Motor neuron (in vitro differentiated cells): ENCODE measurements at regions of chr13 and their contacts with region 1.

Region 1: DNA sequence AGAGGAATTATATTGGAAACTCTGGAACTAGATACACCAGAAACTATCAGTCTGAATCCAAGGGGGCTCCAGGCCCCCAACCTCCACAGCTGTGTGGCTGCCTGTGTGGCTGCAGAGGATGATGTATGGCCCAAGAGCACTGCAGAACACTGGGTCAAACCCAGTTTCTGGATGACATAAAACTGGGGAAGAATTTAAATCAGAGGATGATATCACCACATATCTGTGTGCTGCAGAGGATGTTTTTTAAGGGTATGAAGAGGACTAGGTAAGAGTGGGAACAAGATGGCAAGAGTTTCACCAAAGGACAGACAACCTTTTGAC is 226.4 kb downstream of the SUCLA2 start:
- ATAC-seq: peak in 5 of 8 experiments; percentile 52 to 70 (median 58)
- H3K4me3 ChIP-seq: no peak overlapping the region
- H3K27ac ChIP-seq: no peak overlapping the region
- H3K4me1 ChIP-seq: peaks cover 0 to 4% of the 10 kb centered on the region in 2 donors

Region 2: DNA sequence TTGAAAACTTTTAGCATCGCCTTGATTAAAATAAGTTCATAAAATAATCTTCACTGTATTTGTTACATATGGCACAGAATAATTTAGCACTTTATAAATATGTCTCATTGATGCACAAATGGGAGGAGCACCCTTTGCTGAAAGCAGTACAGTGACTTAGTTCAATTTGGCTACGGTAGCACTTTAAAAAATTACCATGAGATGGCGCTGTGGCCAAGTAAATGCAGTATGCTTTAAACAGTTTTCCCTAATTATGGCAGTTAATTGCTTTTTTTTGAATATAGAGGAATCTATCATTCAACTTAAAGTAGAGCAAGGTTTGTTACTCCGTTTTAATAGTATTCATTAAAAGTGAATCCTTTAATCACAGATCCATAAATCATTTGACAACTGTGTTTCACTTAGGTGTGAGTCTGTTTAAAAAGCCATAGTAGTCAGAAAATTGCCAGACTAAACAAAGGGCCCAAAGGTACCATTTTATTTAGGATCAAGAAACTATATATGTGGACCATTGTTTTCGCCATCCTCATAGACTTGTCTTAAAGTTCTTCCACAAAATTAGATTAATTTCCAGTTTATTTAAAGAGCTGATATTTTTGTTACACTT is 942.9 kb before region 1 on chr13:
- in situ Hi-C with region 1: loop called in 2 of 9 experiments (anchors 10 to 25 kb)
- ATAC-seq: peak in 3 of 8 experiments; percentile 51 to 75 (median 57)
- H3K4me3 ChIP-seq: no peak overlapping the region
- H3K27ac ChIP-seq: no peak overlapping the region
- H3K4me1 ChIP-seq: no peaks in the 10 kb centered on the region

Region 3: DNA sequence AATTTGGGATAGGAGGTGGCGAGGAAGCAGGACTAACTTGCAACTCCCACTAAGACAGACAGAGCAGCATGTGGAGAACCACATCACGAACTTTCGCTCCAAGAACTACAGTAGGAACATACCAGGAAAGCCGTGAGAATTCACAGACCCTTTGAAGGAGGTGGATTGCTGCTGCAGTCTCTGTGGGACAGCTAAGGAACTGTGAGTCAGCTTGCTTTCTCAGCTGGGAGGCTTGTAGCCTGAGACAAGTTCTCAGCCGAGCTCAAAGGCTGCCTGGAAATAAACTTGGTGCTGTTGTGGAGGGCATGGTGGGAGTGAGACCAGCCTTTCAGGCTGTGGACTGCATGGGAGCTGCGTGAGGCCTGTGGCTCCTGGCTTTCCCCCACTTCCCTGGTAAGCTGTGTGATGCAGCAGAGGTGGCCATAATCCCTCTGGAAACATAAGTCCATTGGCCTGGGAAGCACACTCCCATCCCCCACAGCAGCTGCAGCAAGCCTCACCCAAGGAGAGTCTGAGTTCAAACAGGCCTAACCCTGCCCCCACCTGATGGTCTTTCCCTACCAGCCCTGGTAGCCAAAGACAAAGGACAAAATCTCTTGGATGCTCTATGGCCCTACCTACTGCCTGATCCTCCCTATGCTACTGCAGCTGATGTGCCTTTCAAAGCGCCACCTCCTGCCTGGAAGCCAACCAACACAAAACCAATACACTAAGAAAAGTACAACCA is 436.7 kb before region 1 on chr13:
- in situ Hi-C with region 1: no loop called
- ATAC-seq: peak in 1 of 8 experiments; percentile 33
- H3K4me3 ChIP-seq: no peak overlapping the region
- H3K27ac ChIP-seq: no peak overlapping the region
- H3K4me1 ChIP-seq: no peaks in the 10 kb centered on the region

Region 4: GRCh38 chr13:47598340-47598911 is 176.2 kb before region 1 on chr13:
- in situ Hi-C with region 1: no loop called
- ATAC-seq: no peak
- H3K4me3 ChIP-seq: no peak overlapping the region
- H3K27ac ChIP-seq: no peak overlapping the region
- H3K4me1 ChIP-seq: no peaks in the 10 kb centered on the region

Region 5: GRCh38 chr13:47858042-47859025 is 83.7 kb after region 1 on chr13:
- in situ Hi-C with region 1: no loop called
- ATAC-seq: peak in 2 of 8 experiments; percentile 56 to 64
- H3K4me3 ChIP-seq: no peak overlapping the region
- H3K27ac ChIP-seq: no peak overlapping the region
- H3K4me1 ChIP-seq: no peaks in the 10 kb centered on the region

Region 6: DNA sequence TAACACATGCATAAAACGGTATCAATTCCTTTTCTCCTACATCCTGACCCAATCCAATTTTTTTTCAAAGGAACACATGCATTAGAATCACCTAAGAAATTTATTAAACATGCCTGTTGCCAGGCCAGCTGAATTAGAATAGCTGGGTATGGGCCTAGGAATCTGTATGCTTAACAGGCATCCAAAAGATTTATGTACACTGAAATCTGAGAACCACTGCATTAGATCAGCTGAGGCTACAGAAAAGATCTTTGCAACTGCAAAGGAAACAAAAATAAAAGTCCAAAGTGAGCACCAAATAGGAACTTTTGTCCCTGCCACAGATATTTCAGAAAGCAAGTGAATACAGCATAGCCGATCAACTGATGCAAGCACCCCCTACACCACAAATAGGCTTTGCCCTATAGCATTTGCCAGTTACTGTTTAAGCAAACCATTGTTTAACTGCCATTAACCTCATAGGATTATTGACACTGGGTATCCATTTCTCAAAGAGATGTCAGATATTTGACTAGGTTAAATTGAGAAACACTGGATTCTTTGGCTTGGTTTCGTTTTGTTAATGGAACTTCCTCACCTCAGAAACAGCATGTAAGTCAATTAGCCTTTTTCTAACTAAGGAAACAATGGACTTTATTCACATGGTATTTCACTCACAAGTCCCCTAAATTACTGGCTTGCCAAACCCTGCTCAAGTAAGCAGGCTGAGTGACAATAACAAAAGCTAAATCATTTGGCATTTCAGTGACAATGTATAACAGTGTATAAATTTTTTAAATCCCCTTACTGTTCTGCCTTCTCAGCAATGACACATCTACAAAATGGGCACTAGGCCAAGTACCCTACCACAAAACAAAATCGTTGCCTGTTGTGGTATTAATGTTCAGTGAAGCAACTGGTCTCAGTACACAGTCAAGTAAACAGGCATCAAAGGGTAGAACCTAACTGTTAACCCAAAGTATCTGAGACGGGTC is 158.6 kb after region 1 on chr13:
- in situ Hi-C with region 1: no loop called
- ATAC-seq: peak in 2 of 8 experiments; percentile 45 to 69
- H3K4me3 ChIP-seq: no peak overlapping the region
- H3K27ac ChIP-seq: no peak overlapping the region
- H3K4me1 ChIP-seq: peaks cover 0 to 5% of the 10 kb centered on the region in 2 donors